ENCODE measurements at regions of chr9 and their contacts with region 1.

Region 1: DNA sequence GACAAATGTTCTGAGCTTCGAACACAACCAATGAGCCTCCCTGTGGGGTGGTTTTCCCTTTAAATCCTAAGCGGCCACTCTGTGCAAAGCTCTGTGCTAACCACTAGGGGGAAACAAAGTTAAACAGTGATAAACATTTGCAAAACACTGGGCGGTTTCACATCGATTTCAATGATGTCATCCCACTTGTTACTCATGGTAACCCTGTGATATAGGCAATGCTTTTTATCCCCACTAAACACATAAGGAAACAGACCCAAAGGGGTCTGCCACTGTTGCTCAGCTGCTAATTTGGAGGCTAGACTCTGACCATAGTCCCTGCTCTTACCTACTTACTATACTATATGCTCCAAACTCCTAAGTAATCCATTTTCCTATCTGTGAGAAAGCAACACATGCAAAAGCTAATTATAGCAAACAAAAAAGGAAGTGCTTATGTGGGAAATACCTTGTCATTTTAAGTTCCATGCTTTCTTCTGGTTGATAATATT is 57.3 kb downstream of the PTPN3 start:
- DNase-seq: peak; percentile 35 to 40
- ATAC-seq: peak; percentile 84

Region 2: DNA sequence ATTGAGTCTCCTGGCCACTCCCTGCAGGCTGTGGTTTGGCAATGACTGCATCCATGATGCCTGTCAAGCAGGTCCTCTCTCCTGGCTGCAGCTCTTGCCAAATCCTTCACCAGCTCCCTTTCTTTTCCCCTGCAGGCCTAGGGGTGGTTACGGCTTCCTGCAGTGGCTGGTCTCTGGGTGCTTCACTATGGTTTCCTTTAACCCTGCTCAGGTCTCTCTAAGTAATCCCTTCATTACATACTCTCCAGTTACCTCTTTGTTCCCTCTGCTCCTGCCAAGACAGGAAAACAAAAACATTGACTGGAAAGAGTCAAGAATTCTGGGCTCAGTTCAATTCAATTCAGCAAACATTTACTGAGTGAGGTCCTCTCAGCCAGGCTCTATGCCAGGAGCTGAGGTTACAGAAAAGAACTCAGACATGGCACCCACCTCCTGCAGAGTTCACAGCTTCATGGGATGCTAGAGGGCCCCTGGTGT is 77.1 kb after region 1 on chr9:
- intact Hi-C with region 1: loop called in 1 of 2 experiments (anchors 10 kb)
- DNase-seq: no peak
- ATAC-seq: no peak

Region 3: GRCh38 chr9:109996936-109997580 is 556.2 kb after region 1 on chr9:
- intact Hi-C with region 1: no loop called
- DNase-seq: no peak
- ATAC-seq: no peak